ACHN (cell line): ENCODE measurements at regions of chr4 and their contacts with region 1.

Region 1: GRCh38 chr4:78612398-78613178 is 61.0 kb downstream of the ANXA3 start:
- DNase-seq: peak; percentile 62

Region 2: GRCh38 chr4:78396613-78397291 is 215.8 kb before region 1 on chr4:
- in situ Hi-C with region 1: no loop called
- DNase-seq: no peak

Region 3: DNA sequence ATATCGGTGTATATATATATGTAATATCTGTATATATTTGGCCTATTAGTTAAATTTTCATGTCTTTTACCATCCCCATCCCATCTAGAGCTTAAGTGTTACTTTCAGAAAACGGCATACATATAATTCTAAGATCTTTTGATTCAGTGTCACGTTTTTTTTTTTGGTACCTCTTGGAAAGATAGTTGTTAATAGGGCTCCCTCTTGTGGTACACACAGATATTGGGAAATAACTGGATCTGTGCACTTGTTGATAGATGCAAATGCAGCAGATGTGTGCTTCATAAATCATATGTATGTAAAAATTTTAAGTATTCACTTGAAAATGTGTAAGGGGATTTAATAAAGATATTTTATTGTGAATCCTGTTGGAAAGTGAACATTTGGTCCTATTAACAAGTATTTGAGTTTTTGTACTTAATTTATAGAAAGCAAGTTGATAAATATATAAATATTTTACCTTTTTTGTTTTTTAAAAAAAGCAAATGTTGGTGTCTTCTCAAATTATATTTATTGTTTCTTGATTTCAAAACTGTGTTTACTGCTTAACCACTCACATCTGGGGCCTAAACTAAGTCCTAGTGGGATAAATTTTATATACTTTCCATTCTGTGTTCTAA is 251.9 kb after region 1 on chr4:
- in situ Hi-C with region 1: loop called (anchors 25 kb)
- DNase-seq: peak; percentile 77